ENCODE measurements at regions of chr16 and their contacts with region 1.

Region 1: DNA sequence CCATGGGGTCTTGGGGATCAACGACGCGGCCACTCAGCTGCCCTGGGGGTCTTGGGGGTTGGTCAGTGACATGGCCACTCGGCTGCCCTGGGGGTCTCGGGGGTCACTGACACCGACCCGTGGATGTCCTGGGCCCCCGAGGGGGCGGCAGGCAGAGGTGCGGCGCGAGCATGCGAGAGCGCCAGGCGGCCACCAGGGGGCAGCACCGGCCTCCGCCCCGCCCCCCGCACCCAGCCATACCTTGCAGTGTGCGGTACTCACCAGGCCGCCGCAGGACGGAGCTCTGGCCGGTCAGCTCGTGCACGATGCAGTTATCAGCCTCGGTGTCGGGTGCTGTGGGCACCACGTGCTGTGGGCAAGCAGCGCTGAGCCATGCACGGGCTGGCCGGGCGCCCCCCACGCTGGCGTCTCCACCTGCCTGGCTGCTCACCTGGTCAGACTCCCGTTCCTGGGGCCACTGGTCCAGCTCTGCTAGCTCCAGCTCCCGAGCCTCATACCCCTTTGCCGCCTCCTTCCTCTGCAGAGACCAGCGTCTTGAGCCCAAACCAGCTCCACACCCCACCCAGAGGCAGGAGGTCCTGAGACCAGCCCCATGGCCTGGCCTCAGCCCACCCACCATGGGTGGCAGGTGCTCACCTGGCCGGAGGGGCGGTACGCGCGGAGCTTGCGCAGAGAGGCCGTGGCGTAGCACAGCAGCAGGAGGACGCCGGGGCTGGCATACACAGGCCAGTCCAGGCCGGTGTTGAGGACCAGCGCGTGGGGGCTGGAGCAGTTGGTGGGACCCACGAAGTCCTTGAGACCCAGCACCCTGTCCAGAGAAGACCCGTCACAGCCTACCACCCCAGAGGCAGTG is 31.2 kb downstream of the CTU2 start:
- DNase-seq: peak; percentile 81
- H3K4me3 ChIP-seq: no peak overlapping the region
- H3K27ac ChIP-seq: no peak overlapping the region
- H3K4me1 ChIP-seq: peaks cover 14% of the 10 kb centered on the region
- H3K27me3 ChIP-seq: no peaks in the 10 kb centered on the region
- CTCF ChIP-seq: peak; percentile 99 to 100 (median 100)
- POLR2A ChIP-seq: no peak

Region 2: DNA sequence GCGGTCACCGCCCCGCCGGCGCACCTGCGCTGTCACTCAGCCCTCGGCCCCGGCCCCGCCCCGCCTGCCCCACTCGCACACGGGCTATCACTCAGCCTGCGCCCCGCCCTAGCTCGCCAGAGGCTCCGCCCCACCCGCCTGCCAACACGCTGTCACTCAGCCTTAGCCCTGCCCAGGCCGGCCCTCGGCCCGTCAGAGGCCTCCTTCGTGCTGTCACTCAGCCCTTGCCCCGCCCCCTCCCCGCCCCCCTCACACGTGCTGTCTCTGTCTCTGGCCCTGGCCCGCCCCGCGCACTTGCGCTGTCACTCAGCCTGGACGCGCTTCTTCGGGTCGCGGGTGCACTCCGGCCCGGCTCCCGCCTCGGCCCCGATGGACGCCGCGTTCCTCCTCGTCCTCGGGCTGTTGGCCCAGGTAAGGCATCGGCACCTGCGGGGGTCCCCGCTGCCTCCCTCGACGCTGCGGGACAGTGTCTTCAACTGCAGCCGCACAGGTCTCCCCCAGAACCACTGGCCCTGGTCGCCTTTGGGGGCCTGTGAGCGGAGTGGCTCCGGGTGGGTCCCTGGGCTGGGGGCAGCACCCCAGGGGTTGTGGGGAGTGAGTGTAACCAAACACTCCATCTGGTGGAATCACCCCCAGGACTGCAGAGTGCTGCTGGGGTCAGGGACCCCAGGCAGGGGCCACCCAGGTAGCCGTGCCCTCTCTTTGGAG is 434.1 kb after region 1 on chr16 and contains the start of gene CDH15:
- intact Hi-C with region 1: loop called (anchors 10 kb)
- DNase-seq: peak; percentile 95
- H3K4me3 ChIP-seq: peak within 1 kb of the TSS in 1 of 2 donors; percentile 10
- H3K27ac ChIP-seq: no peak within 1 kb of the TSS
- H3K4me1 ChIP-seq: no peaks in the 10 kb centered on the region
- H3K27me3 ChIP-seq: no peaks in the 10 kb centered on the region
- CTCF ChIP-seq: no peak
- POLR2A ChIP-seq: no peak
- total RNA-seq, gene CDH15: 0.64 to 2.7 TPM

Measured in prostate gland (tissue), 2 donors.